ENCODE measurements at regions of chr19 and their contacts with region 1.

Region 1: GRCh38 chr19:10574462-10574861 is 5.7 kb upstream of the CDKN2D start:
- DNase-seq: no peak
- ATAC-seq: no peak
- H3K4me3 ChIP-seq: no peak overlapping the region
- H3K27ac ChIP-seq: no peak overlapping the region
- H3K4me1 ChIP-seq: no peaks in the 10 kb centered on the region
- H3K27me3 ChIP-seq: no peaks in the 10 kb centered on the region
- CTCF ChIP-seq: no peak
- EP300 ChIP-seq: no peak
- POLR2A ChIP-seq: no peak
- RAD21 ChIP-seq: no peak

Region 2: DNA sequence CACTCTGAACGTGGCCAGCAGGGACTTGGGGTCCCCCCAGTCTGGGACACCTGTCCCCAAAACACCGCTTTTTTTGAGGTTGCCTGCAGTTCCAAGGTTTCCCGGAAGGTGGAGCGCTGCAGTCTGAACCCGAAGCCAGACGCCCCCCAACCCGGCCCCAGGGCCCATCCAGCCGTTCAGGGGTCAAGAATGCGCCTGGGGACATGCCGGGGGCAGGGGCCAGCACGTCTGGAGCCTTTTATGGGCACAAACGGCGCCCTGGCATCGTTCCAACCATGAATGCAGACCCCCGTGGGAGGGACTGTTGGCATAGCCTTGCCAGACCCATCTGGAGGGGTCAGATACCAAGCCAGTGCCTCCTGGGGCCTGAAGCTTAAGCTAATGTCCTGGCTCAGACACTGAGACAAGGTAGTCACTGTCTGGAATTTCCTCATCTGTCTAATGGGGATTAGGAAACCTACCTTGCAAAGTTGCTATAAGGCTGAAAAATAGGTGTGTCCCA is 64.1 kb before region 1 on chr19:
- CTCF ChIA-PET with region 1: interaction called, 12 read pairs
- POLR2A ChIA-PET with region 1: interaction called, 3 read pairs
- RAD21 ChIA-PET with region 1: no interaction called
- SMC1A ChIA-PET with region 1: interaction called, 3 read pairs
- in situ Hi-C with region 1: no loop called
- intact Hi-C with region 1: no loop called
- DNase-seq: no peak
- ATAC-seq: peak; percentile 39
- H3K4me3 ChIP-seq: no peak overlapping the region
- H3K27ac ChIP-seq: no peak overlapping the region
- H3K4me1 ChIP-seq: peaks cover 8% of the 10 kb centered on the region
- H3K27me3 ChIP-seq: peaks cover 9 to 14% of the 10 kb centered on the region in 2 experiments
- CTCF ChIP-seq: peak; percentile 55 to 91 (median 88)
- EP300 ChIP-seq: no peak
- POLR2A ChIP-seq: no peak
- RAD21 ChIP-seq: no peak

Region 3: GRCh38 chr19:10525624-10526023 is 48.8 kb before region 1 on chr19:
- CTCF ChIA-PET with region 1: no interaction called
- POLR2A ChIA-PET with region 1: no interaction called
- RAD21 ChIA-PET with region 1: no interaction called
- SMC1A ChIA-PET with region 1: no interaction called
- in situ Hi-C with region 1: no loop called
- intact Hi-C with region 1: no loop called
- DNase-seq: no peak
- ATAC-seq: no peak
- H3K4me3 ChIP-seq: no peak overlapping the region
- H3K27ac ChIP-seq: no peak overlapping the region
- H3K4me1 ChIP-seq: no peaks in the 10 kb centered on the region
- H3K27me3 ChIP-seq: no peaks in the 10 kb centered on the region
- CTCF ChIP-seq: no peak
- EP300 ChIP-seq: no peak
- POLR2A ChIP-seq: no peak
- RAD21 ChIP-seq: no peak

Region 4: GRCh38 chr19:10543420-10544241 is 30.8 kb before region 1 on chr19 and contains the start of gene ATG4D:
- CTCF ChIA-PET with region 1: interaction called, 35 read pairs
- POLR2A ChIA-PET with region 1: interaction called, 5 read pairs
- RAD21 ChIA-PET with region 1: interaction called, 16 read pairs
- SMC1A ChIA-PET with region 1: interaction called, 9 read pairs
- in situ Hi-C with region 1: no loop called
- intact Hi-C with region 1: loop called (anchors 1 kb)
- DNase-seq: no peak
- ATAC-seq: peak; percentile 91
- H3K4me3 ChIP-seq: peak within 1 kb of the TSS; percentile 93
- H3K27ac ChIP-seq: peak within 1 kb of the TSS; percentile 83
- H3K4me1 ChIP-seq: peaks cover 11% of the 10 kb centered on the region
- H3K27me3 ChIP-seq: peaks cover 0 to 4% of the 10 kb centered on the region in 2 experiments; a peak in 1 of 4 replicates
- CTCF ChIP-seq: no peak
- EP300 ChIP-seq: no peak
- POLR2A ChIP-seq: peak; percentile 95
- RAD21 ChIP-seq: no peak
- polyA plus RNA-seq, gene ATG4D: 0.39 to 2.3 TPM

Measured in GM12878 (cell line).